ENCODE measurements at regions of chr1 and their contacts with region 1.

Region 1: DNA sequence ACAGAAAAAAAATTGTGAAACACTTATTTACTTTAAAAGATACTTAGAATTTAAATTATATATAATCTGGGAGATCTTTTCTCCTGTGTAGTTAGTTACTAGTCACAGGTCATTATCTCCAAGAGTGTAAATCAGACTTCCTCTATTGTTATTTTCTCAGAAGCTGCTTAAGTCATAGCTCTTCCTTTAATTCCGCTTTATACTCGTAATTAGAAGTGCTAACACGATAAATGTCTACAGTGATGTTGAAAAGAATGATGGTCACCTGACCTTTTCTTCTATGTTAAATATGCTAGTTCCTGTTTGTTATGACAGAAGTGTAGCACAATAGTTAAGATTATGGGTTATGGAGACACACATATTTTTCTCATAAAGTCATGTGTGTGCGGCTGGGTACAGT is 123.6 kb downstream of the TGFB2 start:
- DNase-seq: no peak
- ATAC-seq: peak; percentile 58
- H3K4me3 ChIP-seq: no peak overlapping the region
- H3K4me3 Mint-ChIP-seq: no peak overlapping the region
- H3K27ac ChIP-seq: no peak overlapping the region
- H3K27ac Mint-ChIP-seq: no peak overlapping the region
- H3K4me1 ChIP-seq: no peaks in the 10 kb centered on the region
- H3K4me1 Mint-ChIP-seq: peaks cover 0 to 7% (median 0%) of the 10 kb centered on the region in 7 donors
- H3K27me3 ChIP-seq: no peaks in the 10 kb centered on the region
- H3K27me3 Mint-ChIP-seq: peaks cover 0 to 7% (median 0%) of the 10 kb centered on the region in 5 donors

Region 2: GRCh38 chr1:218433744-218434143 is 35.0 kb before region 1 on chr1:
- CTCF ChIA-PET with region 1: no interaction called
- POLR2A ChIA-PET with region 1: no interaction called
- intact Hi-C with region 1: loop called in 1 of 2 experiments (anchors 1 kb)
- DNase-seq: no peak
- ATAC-seq: no peak
- H3K4me3 ChIP-seq: no peak overlapping the region
- H3K4me3 Mint-ChIP-seq: no peak overlapping the region
- H3K27ac ChIP-seq: no peak overlapping the region
- H3K27ac Mint-ChIP-seq: no peak overlapping the region
- H3K4me1 ChIP-seq: no peaks in the 10 kb centered on the region
- H3K4me1 Mint-ChIP-seq: no peaks in the 10 kb centered on the region
- H3K27me3 ChIP-seq: no peaks in the 10 kb centered on the region
- H3K27me3 Mint-ChIP-seq: peaks cover 0 to 13% (median 0%) of the 10 kb centered on the region in 5 donors